ENCODE measurements at regions of chr19 and their contacts with region 1.

Region 1: GRCh38 chr19:55566823-55567222 is 13.8 kb downstream of the ZNF579 start:
- DNase-seq: no peak
- ATAC-seq: no peak
- H3K4me3 ChIP-seq: no peak overlapping the region
- H3K4me3 Mint-ChIP-seq: no peak overlapping the region
- H3K27ac ChIP-seq: no peak overlapping the region
- H3K27ac Mint-ChIP-seq: no peak overlapping the region
- H3K4me1 ChIP-seq: no peaks in the 10 kb centered on the region
- H3K4me1 Mint-ChIP-seq: no peaks in the 10 kb centered on the region
- H3K27me3 ChIP-seq: no peaks in the 10 kb centered on the region
- H3K27me3 Mint-ChIP-seq: peaks cover 16% of the 10 kb centered on the region
- CTCF ChIP-seq: no peak

Region 2: GRCh38 chr19:55353803-55354697 is 212.8 kb before region 1 on chr19:
- CTCF ChIA-PET with region 1: no interaction called
- POLR2A ChIA-PET with region 1: no interaction called
- intact Hi-C with region 1: no loop called
- DNase-seq: peak; percentile 27 to 83 (median 65)
- ATAC-seq: peak; percentile 89
- H3K4me3 ChIP-seq: peak overlapping the region; percentile 32 to 48
- H3K4me3 Mint-ChIP-seq: peak overlapping the region; percentile 75
- H3K27ac ChIP-seq: no peak overlapping the region
- H3K27ac Mint-ChIP-seq: no peak overlapping the region
- H3K4me1 ChIP-seq: peaks cover 20% of the 10 kb centered on the region
- H3K4me1 Mint-ChIP-seq: peaks cover 20% of the 10 kb centered on the region
- H3K27me3 ChIP-seq: peaks cover 26 to 34% of the 10 kb centered on the region in 2 experiments
- H3K27me3 Mint-ChIP-seq: peaks cover 32% of the 10 kb centered on the region
- CTCF ChIP-seq: no peak

Region 3: GRCh38 chr19:55526216-55527196 is 40.3 kb before region 1 on chr19:
- CTCF ChIA-PET with region 1: no interaction called
- POLR2A ChIA-PET with region 1: no interaction called
- intact Hi-C with region 1: loop called in 1 of 2 experiments (anchors 5 kb)
- DNase-seq: peak in 2 of 9 experiments; percentile 13 to 58
- ATAC-seq: no peak
- H3K4me3 ChIP-seq: no peak overlapping the region
- H3K4me3 Mint-ChIP-seq: no peak overlapping the region
- H3K27ac ChIP-seq: no peak overlapping the region
- H3K27ac Mint-ChIP-seq: no peak overlapping the region
- H3K4me1 ChIP-seq: no peaks in the 10 kb centered on the region
- H3K4me1 Mint-ChIP-seq: no peaks in the 10 kb centered on the region
- H3K27me3 ChIP-seq: no peaks in the 10 kb centered on the region
- H3K27me3 Mint-ChIP-seq: peaks cover 11% of the 10 kb centered on the region
- CTCF ChIP-seq: no peak